PC-9 (cell line): ENCODE measurements at regions of chr10 and their contacts with region 1.

Region 1: DNA sequence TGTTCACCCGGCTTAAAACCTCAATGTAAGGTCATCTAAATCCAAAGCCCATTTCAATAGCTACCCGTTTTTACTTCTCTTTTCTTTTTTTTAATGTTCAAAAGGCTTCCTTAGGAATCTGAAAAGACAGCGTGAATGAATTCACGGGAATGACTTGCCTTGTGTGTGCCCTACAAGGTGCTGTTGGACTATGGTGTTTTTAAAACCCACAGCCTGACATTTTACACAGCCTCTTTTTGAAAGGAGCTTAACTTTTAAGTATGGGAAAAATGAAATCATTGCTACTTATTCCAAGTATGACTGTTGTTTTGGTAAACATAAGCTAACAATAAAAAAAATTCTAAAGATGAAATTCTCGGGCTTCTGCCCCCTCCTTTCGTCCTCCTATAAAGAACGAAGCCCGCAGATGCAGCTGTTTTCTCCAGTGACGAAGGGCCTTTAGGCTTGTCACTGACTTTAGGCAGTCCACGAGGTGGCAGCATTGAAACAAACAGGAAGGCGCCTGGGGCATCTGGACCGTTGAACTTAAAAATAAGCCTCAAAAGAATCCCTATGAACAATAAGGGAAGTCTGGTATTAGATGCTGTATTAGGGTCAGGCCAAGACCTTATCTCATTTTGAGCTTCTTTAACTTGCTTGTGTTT is 141.3 kb downstream of the NRP1 start:
- DNase-seq: peak; percentile 35 to 75
- H3K4me3 ChIP-seq: no peak overlapping the region
- H3K27ac ChIP-seq: no peak overlapping the region
- H3K4me1 ChIP-seq: no peaks in the 10 kb centered on the region
- H3K27me3 ChIP-seq: no peaks in the 10 kb centered on the region
- CTCF ChIP-seq: peak; percentile 66

Region 2: DNA sequence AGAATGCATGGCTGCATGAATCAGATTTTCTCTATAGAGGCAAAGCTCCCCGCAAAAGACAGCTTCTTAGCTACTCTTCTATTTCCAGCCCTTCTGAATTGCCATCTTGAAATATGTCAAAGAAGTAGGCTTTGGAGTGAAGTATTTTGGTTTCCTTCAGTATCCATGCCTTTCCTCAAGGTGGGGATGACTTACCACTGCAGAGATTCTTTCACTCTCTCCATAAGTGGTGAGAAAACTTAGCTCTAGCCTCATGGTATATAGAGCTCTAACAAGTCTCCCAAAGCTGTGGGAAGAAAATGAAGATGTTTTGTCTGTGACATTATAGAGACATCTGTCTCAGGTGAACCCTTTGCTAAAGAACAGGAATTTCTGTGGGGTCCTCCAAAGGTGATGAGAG is 145.5 kb before region 1 on chr10:
- CTCF ChIA-PET with region 1: no interaction called
- POLR2A ChIA-PET with region 1: no interaction called
- intact Hi-C with region 1: no loop called
- DNase-seq: no peak
- H3K4me3 ChIP-seq: no peak overlapping the region
- H3K27ac ChIP-seq: no peak overlapping the region
- H3K4me1 ChIP-seq: no peaks in the 10 kb centered on the region
- H3K27me3 ChIP-seq: no peaks in the 10 kb centered on the region
- CTCF ChIP-seq: no peak

Region 3: GRCh38 chr10:33258967-33259366 is 65.8 kb after region 1 on chr10:
- CTCF ChIA-PET with region 1: no interaction called
- POLR2A ChIA-PET with region 1: no interaction called
- intact Hi-C with region 1: loop called (anchors 1 kb)
- DNase-seq: no peak
- H3K4me3 ChIP-seq: no peak overlapping the region
- H3K27ac ChIP-seq: no peak overlapping the region
- H3K4me1 ChIP-seq: peaks cover 28% of the 10 kb centered on the region
- H3K27me3 ChIP-seq: no peaks in the 10 kb centered on the region
- CTCF ChIP-seq: no peak

Region 4: GRCh38 chr10:33291053-33291592 is 97.9 kb after region 1 on chr10:
- CTCF ChIA-PET with region 1: no interaction called
- POLR2A ChIA-PET with region 1: no interaction called
- intact Hi-C with region 1: loop called (anchors 1 kb)
- DNase-seq: peak; percentile 37 to 91
- H3K4me3 ChIP-seq: peak overlapping the region; percentile 31; the same call in 1 of the 2 replicates
- H3K27ac ChIP-seq: peak overlapping the region; percentile 99
- H3K4me1 ChIP-seq: peaks cover 48% of the 10 kb centered on the region
- H3K27me3 ChIP-seq: no peaks in the 10 kb centered on the region
- CTCF ChIP-seq: no peak

Region 5: GRCh38 chr10:33335801-33336581 is 142.8 kb after region 1 on chr10:
- CTCF ChIA-PET with region 1: interaction called, 21 read pairs
- POLR2A ChIA-PET with region 1: no interaction called
- intact Hi-C with region 1: no loop called
- DNase-seq: peak; percentile 72
- H3K4me3 ChIP-seq: peak overlapping the region; percentile 92
- H3K27ac ChIP-seq: peak overlapping the region; percentile 79
- H3K4me1 ChIP-seq: peaks cover 16% of the 10 kb centered on the region; the same call in 1 of the 2 replicates
- H3K27me3 ChIP-seq: no peaks in the 10 kb centered on the region
- CTCF ChIP-seq: no peak

Region 6: GRCh38 chr10:33801748-33802147 is 608.6 kb after region 1 on chr10:
- CTCF ChIA-PET with region 1: no interaction called
- POLR2A ChIA-PET with region 1: interaction called, 12 read pairs
- intact Hi-C with region 1: no loop called
- DNase-seq: peak; percentile 54 to 80
- H3K4me3 ChIP-seq: no peak overlapping the region
- H3K27ac ChIP-seq: no peak overlapping the region
- H3K4me1 ChIP-seq: peaks cover 14% of the 10 kb centered on the region
- H3K27me3 ChIP-seq: no peaks in the 10 kb centered on the region
- CTCF ChIP-seq: no peak

Region 7: GRCh38 chr10:34637418-34637911 is 1444.3 kb after region 1 on chr10:
- CTCF ChIA-PET with region 1: no interaction called
- POLR2A ChIA-PET with region 1: no interaction called
- intact Hi-C with region 1: loop called (anchors 5 kb)
- DNase-seq: peak in 1 of 2 experiments; percentile 56
- H3K4me3 ChIP-seq: no peak overlapping the region
- H3K27ac ChIP-seq: no peak overlapping the region
- H3K4me1 ChIP-seq: peaks cover 5% of the 10 kb centered on the region; the same call in 1 of the 2 replicates
- H3K27me3 ChIP-seq: no peaks in the 10 kb centered on the region
- CTCF ChIP-seq: peak; percentile 94